ENCODE measurements at regions of chr5 and their contacts with region 1.

Region 1: DNA sequence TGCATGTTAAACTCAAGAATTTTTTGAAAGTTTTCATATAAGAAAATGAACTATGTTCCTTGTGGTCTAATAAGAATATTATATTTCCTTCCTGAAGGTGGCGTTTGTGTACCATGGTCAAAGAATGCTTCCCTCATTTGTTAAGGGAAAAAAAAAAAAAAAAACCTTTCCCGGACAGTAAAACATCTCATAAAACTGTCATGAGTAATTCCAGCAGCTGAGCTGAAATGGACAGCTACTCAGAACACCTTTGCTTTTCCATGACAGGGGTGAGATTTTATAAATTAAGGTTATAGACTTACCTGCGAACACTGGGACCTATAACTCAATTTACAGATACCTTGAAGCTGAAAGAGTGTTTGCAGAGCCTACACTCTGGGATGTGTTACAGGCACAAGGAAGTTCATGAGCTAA is 113.2 kb upstream of the RANBP3L start:
- DNase-seq: no peak
- ATAC-seq: no peak
- H3K4me3 Mint-ChIP-seq: no peak overlapping the region
- H3K27ac Mint-ChIP-seq: no peak overlapping the region
- H3K4me1 Mint-ChIP-seq: peaks cover 8% of the 10 kb centered on the region
- H3K27me3 Mint-ChIP-seq: peaks cover 7% of the 10 kb centered on the region

Region 2: DNA sequence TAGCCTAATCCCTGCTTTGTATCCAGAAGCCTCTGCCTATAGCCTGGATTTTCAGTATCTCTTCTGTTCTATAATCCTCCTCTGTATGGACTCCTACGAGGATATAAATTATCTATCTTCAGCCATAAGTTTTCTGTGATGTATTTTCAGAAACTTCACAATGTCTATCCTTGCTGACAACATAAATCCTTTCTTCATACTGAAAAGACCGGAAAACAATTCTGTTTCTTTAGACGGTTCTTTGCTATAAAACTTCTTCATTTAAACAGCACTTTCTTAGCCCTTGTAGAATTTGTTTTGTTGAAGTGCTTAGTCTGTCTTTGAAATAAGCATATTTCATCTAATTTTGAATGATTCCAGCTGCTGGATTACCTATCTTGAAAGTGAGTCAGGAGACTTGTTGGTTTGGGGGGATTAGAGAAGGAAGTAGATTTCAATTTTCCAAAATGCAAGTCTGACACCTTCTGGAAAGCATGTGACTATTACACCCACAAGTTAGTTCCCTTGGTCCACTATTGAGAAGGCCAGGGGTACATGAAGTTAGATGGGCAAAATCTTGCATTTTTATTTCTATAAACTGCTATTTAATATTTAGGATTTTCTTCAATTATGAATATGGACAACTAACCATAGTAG is 16.9 kb before region 1 on chr5:
- CTCF ChIA-PET with region 1: no interaction called
- POLR2A ChIA-PET with region 1: no interaction called
- DNase-seq: no peak
- ATAC-seq: no peak
- H3K4me3 Mint-ChIP-seq: no peak overlapping the region
- H3K27ac Mint-ChIP-seq: no peak overlapping the region
- H3K4me1 Mint-ChIP-seq: no peaks in the 10 kb centered on the region
- H3K27me3 Mint-ChIP-seq: peaks cover 5% of the 10 kb centered on the region

Region 3: GRCh38 chr5:36450229-36451024 is 35.6 kb after region 1 on chr5:
- CTCF ChIA-PET with region 1: no interaction called
- POLR2A ChIA-PET with region 1: no interaction called
- DNase-seq: no peak
- ATAC-seq: no peak
- H3K4me3 Mint-ChIP-seq: no peak overlapping the region
- H3K27ac Mint-ChIP-seq: no peak overlapping the region
- H3K4me1 Mint-ChIP-seq: no peaks in the 10 kb centered on the region
- H3K27me3 Mint-ChIP-seq: peaks cover 4% of the 10 kb centered on the region

Region 4: GRCh38 chr5:36507332-36507952 is 92.6 kb after region 1 on chr5:
- CTCF ChIA-PET with region 1: interaction called, 52 read pairs
- POLR2A ChIA-PET with region 1: no interaction called
- DNase-seq: peak; percentile 77
- ATAC-seq: peak; percentile 68
- H3K4me3 Mint-ChIP-seq: no peak overlapping the region
- H3K27ac Mint-ChIP-seq: no peak overlapping the region
- H3K4me1 Mint-ChIP-seq: no peaks in the 10 kb centered on the region
- H3K27me3 Mint-ChIP-seq: peaks cover 7% of the 10 kb centered on the region

Region 5: GRCh38 chr5:36630201-36631145 is 215.6 kb after region 1 on chr5:
- CTCF ChIA-PET with region 1: no interaction called
- POLR2A ChIA-PET with region 1: no interaction called
- DNase-seq: no peak
- ATAC-seq: no peak
- H3K4me3 Mint-ChIP-seq: no peak overlapping the region
- H3K27ac Mint-ChIP-seq: no peak overlapping the region
- H3K4me1 Mint-ChIP-seq: no peaks in the 10 kb centered on the region
- H3K27me3 Mint-ChIP-seq: peaks cover 6% of the 10 kb centered on the region

Region 6: DNA sequence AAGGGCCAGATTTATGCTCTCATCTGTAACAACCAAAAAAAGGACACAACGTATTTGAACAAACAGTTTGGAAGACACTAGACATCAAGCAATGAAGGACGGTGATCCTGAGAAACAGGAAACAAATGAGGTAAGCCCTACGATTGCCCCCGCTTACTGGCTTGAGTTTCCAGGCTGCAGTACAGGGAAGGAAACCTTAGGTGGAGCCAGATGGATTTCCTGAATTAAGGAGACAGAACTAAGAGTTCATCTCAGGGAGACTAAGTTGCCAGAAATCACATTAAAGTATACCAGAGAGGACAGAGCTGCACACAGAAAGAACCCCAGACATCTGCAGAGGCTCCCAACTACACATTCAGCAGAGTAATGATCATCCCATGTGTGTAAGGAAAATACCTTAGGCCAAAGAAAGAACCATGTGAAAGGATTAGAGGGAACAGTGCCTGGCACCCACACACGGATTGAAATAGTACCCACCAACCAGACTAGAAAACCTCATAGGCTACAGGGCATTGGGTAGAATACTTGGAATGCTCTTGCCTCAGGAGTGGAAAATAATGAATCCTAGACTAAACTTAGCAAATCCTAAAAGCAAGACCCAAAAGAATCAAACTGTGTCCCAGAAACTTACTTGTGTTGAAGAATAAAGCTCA is 362.4 kb after region 1 on chr5:
- CTCF ChIA-PET with region 1: no interaction called
- POLR2A ChIA-PET with region 1: no interaction called
- DNase-seq: no peak
- ATAC-seq: no peak
- H3K4me3 Mint-ChIP-seq: no peak overlapping the region
- H3K27ac Mint-ChIP-seq: no peak overlapping the region
- H3K4me1 Mint-ChIP-seq: no peaks in the 10 kb centered on the region
- H3K27me3 Mint-ChIP-seq: peaks cover 11% of the 10 kb centered on the region